HepG2 (cell line): ENCODE measurements at regions of chr3 and their contacts with region 1.

Region 1: DNA sequence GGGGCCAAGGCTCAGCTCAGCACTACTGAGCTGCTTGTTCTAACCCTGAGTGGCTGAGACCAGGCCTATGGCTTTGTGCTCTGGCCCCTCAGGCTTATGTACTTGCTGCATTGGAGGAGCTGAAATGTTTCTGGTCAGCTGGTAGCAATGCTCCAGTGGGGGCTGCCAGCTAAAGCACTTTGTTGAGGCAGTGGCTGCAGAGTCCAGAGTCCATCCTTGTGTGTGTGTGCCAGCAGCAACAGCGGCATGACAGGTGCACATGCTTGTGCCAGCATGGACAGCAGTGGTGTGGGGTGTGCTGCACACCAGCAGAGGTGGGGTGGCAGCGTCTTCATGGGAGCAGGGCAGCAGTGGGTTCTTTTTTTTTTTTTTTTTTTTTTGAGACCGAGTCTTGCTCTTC is 169.1 kb downstream of the VPS8 start:
- DNase-seq: peak; percentile 78
- ATAC-seq: peak; percentile 99
- H3K4me3 ChIP-seq: no peak overlapping the region
- H3K27ac ChIP-seq: peak overlapping the region; percentile 1
- H3K4me1 ChIP-seq: peaks cover 20% of the 10 kb centered on the region
- H3K27me3 ChIP-seq: no peaks in the 10 kb centered on the region
- CTCF ChIP-seq: no peak
- EP300 ChIP-seq: 0 out of 4 replicates have a peak, but pooled peaks of 1 of the 2 experiments have one; percentile 8
- POLR2A ChIP-seq: no peak
- RAD21 ChIP-seq: no peak

Region 2: GRCh38 chr3:185176750-185177359 is 195.8 kb after region 1 on chr3:
- CTCF ChIA-PET with region 1: no interaction called
- POLR2A ChIA-PET with region 1: no interaction called
- in situ Hi-C with region 1: no loop called
- intact Hi-C with region 1: loop called (anchors 10 kb)
- DNase-seq: peak; percentile 36
- ATAC-seq: no peak
- H3K4me3 ChIP-seq: peak overlapping the region in 2 of 3 experiments; percentile 22 to 52; a peak in 3 of 6 replicates
- H3K27ac ChIP-seq: no peak overlapping the region
- H3K4me1 ChIP-seq: peaks cover 24% of the 10 kb centered on the region
- H3K27me3 ChIP-seq: peaks cover 0 to 2% of the 10 kb centered on the region in 2 experiments; a peak in 1 of 5 replicates
- CTCF ChIP-seq: peak; percentile 66
- EP300 ChIP-seq: no peak
- POLR2A ChIP-seq: no peak
- RAD21 ChIP-seq: peak; percentile 58